ENCODE measurements at regions of chr19 and their contacts with region 1.

Region 1: GRCh38 chr19:28466107-28467045 is 746.6 kb downstream of the UQCRFS1 start:
- DNase-seq: peak; percentile 92
- H3K4me3 Mint-ChIP-seq: no peak overlapping the region
- H3K27ac Mint-ChIP-seq: peak overlapping the region; percentile 79
- H3K4me1 Mint-ChIP-seq: peaks cover 61% of the 10 kb centered on the region
- H3K27me3 Mint-ChIP-seq: no peaks in the 10 kb centered on the region

Region 2: GRCh38 chr19:28633319-28634018 is 167.1 kb after region 1 on chr19:
- intact Hi-C with region 1: loop called (anchors 1 kb)
- DNase-seq: peak; percentile 89
- H3K4me3 Mint-ChIP-seq: no peak overlapping the region
- H3K27ac Mint-ChIP-seq: peak overlapping the region; percentile 38
- H3K4me1 Mint-ChIP-seq: peaks cover 14% of the 10 kb centered on the region
- H3K27me3 Mint-ChIP-seq: no peaks in the 10 kb centered on the region

Region 3: DNA sequence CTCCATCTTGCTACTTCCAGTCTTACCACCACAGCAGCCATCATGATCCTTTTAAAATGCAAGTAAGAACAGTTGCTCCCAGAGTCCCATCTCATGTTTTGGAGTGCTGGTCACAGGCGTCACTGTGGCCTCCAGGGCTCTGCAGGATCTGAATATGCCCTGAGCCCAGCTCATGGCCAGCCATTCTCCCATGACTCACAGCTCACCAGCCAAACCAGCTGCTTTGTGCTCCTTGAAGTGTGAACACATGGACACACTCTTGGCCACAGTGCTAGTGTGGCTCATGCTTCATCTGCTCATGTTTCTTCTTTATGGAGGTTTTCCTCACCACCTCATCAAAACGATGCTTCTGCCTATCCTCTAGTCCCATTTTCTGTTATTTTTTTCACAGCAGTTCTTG is 280.1 kb after region 1 on chr19:
- intact Hi-C with region 1: no loop called
- DNase-seq: no peak
- H3K4me3 Mint-ChIP-seq: no peak overlapping the region
- H3K27ac Mint-ChIP-seq: no peak overlapping the region
- H3K4me1 Mint-ChIP-seq: no peaks in the 10 kb centered on the region
- H3K27me3 Mint-ChIP-seq: peaks cover 3% of the 10 kb centered on the region

Measured in activated CD4-positive, alpha-beta T cell treated with anti-CD3 and anti-CD28 coated beads, Interleukin-2, amount 10 ng/mL, durations not matched to agents 24 days and 14 days (primary cell).